ENCODE measurements at regions of chr20 and their contacts with region 1.

Region 1: DNA sequence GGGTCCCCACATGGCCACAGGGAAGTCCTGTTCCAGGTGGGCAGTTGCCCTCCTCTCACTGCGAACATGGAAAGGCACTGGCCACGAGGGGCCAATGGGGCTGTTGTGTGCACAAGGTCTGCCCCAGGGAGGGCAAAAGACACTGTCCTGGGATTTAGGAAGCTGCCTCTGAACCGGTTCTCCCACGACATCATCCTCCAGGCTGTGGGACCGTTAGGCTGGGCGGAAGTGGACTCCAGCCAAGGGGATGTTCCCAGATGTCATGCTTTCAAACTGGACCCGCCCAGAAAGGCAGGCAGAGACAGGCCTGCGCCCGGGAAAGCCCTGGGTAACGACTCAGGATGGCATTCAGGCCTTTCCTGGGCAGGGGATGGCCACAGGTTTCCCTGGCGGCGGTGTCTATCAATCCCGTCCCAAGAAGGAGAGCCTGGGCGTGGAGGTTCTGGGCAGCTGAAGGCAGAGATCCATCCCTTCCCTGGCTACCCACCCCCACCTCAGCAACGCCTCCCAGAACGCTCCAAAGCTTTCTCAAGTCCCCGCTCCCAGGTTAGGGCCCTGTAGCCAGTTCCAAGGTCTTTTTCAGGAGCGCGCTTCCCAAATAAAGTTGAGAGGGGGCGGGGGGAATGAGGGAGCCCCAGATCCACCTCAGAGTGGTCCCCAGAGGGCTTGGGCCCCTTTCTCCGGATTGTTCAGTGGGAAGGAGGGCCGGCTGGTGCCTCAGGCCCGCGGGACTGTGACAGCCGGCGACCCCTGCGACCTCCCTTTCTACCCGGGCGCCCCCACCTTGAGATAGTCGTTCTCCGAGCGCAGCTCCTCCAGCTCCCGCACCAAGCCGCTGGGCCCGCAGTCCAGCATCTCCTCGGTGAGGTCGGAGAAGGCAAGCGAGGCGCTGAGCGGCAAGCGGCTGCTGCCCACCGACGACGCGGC is 13.8 kb upstream of the TLDC2 start:
- DNase-seq: no peak
- ATAC-seq: no peak
- H3K4me3 ChIP-seq: peak overlapping the region in 4 of 5 experiments; percentile 31 to 65 (median 48)
- H3K4me3 Mint-ChIP-seq: peak overlapping the region; percentile 60
- H3K27ac ChIP-seq: no peak overlapping the region
- H3K27ac Mint-ChIP-seq: peak overlapping the region; percentile 50
- H3K4me1 ChIP-seq: peaks cover 46 to 49% of the 10 kb centered on the region in 2 donors
- H3K4me1 Mint-ChIP-seq: peaks cover 69% of the 10 kb centered on the region
- H3K27me3 ChIP-seq: no peaks in the 10 kb centered on the region
- H3K27me3 Mint-ChIP-seq: no peaks in the 10 kb centered on the region
- CTCF ChIP-seq: no peak

Region 2: GRCh38 chr20:36613974-36614373 is 248.2 kb before region 1 on chr20:
- CTCF ChIA-PET with region 1: interaction called, 33 read pairs
- POLR2A ChIA-PET with region 1: no interaction called
- intact Hi-C with region 1: loop called (anchors 5 kb)
- DNase-seq: no peak
- ATAC-seq: no peak
- H3K4me3 ChIP-seq: no peak overlapping the region
- H3K4me3 Mint-ChIP-seq: no peak overlapping the region
- H3K27ac ChIP-seq: no peak overlapping the region
- H3K27ac Mint-ChIP-seq: no peak overlapping the region
- H3K4me1 ChIP-seq: no peaks in the 10 kb centered on the region
- H3K4me1 Mint-ChIP-seq: no peaks in the 10 kb centered on the region
- H3K27me3 ChIP-seq: no peaks in the 10 kb centered on the region
- H3K27me3 Mint-ChIP-seq: no peaks in the 10 kb centered on the region
- CTCF ChIP-seq: no peak

Region 3: DNA sequence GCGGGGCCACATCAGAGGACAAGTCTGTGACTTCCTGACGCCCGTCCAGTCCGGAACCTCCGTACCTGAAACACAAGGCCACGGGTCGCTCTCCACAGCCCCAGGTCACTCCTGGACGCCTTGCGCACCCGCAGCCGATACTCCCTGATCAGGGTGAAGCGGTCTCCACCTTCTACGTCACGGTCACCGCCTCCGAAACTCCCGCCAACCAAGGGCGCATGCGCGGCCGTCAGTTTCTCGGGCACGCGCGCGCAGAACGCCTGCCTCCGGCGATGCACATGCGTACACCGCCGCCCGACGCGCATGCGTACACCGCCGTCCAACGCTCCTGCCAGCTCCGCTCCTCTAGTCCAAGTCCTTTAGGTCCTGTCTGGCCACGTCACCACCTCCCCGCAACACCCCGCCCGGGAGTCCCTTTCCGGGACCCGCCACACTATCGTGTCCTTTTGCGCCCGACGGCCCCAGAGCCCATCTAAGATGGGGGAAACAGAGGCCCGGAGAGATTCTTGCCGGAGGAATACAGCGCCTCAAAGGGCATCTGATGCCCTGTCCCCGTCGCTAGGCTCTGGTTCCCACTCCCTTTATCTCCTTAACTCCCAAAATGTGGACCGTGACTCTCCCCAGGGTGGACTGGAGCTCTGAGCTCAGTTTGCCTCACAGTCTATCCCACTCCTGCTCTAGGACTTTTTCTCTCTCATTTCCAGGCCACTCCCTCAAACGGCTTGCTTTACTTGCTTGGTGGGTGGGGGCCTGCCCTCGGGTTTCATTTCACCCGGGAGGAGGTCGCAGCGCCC is 88.3 kb before region 1 on chr20 and contains the start of gene DSN1:
- CTCF ChIA-PET with region 1: interaction called, 10 read pairs
- POLR2A ChIA-PET with region 1: interaction called, 3 read pairs
- intact Hi-C with region 1: loop called (anchors 1 kb)
- DNase-seq: peak; percentile 98
- ATAC-seq: peak; percentile 86
- H3K4me3 ChIP-seq: peak within 1 kb of the TSS; percentile 84 to 96 (median 92)
- H3K4me3 Mint-ChIP-seq: peak within 1 kb of the TSS; percentile 89
- H3K27ac ChIP-seq: peak within 1 kb of the TSS; percentile 77 to 92
- H3K27ac Mint-ChIP-seq: peak within 1 kb of the TSS; percentile 99
- H3K4me1 ChIP-seq: peaks cover 8 to 16% of the 10 kb centered on the region in 2 donors
- H3K4me1 Mint-ChIP-seq: peaks cover 33% of the 10 kb centered on the region
- H3K27me3 ChIP-seq: no peaks in the 10 kb centered on the region
- H3K27me3 Mint-ChIP-seq: no peaks in the 10 kb centered on the region
- CTCF ChIP-seq: no peak
- total RNA-seq, gene DSN1: 17.1 and 18.4 TPM in 2 replicates

Region 4: DNA sequence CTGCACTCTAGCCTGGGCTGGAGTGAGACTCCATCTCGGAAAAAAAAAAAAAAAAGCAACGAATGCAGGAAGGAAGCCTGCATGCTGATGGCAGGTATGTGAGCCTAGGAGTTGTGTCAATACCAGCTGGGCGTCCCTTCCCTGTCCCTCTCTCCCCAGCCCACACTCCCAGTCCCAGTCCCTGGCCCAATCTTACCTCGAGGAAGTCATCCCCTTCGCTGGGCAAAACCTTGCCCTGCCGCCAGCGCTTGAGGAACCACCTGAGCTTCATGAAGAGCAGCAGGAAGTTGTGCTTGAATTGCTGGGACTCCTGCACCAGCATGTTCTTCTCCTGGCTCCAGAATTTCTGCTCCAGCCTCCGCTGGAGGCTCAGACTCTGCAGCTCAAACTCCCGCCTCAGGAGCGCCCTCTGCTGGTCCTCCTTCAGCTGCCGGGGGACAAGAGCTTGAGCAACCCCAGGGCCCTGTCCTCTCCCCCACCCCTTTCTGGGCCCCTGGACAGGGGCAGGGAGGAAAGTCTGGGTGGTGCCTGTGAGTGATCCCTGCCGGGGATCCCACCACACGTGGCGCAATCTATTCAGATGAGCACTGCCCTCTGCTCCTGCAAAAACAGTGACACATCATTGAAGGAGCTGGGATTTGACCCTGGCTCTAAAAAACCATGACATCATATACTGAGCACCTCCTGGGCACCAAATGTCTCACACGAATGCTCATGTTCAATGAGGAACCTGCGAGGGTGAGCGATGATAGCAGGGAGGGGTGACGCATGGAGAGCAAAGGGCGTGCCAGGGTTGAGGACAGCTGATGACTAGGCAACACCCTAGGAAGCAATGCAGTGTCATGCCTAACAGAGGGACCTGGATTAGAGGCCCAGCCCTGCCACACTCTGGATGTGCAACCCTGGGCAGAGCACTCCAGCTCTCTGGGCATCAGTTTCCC is 53.6 kb before region 1 on chr20:
- CTCF ChIA-PET with region 1: interaction called, 80 read pairs
- POLR2A ChIA-PET with region 1: no interaction called
- intact Hi-C with region 1: loop called (anchors 1 kb)
- DNase-seq: peak; percentile 78
- ATAC-seq: peak; percentile 71
- H3K4me3 ChIP-seq: no peak overlapping the region
- H3K4me3 Mint-ChIP-seq: no peak overlapping the region
- H3K27ac ChIP-seq: no peak overlapping the region
- H3K27ac Mint-ChIP-seq: peak overlapping the region; percentile 50
- H3K4me1 ChIP-seq: peaks cover 0 to 9% of the 10 kb centered on the region in 2 donors
- H3K4me1 Mint-ChIP-seq: peaks cover 3% of the 10 kb centered on the region
- H3K27me3 ChIP-seq: no peaks in the 10 kb centered on the region
- H3K27me3 Mint-ChIP-seq: no peaks in the 10 kb centered on the region
- CTCF ChIP-seq: peak; percentile 83

Region 5: GRCh38 chr20:36847009-36847709 is 15.0 kb before region 1 on chr20:
- CTCF ChIA-PET with region 1: interaction called, 47 read pairs
- POLR2A ChIA-PET with region 1: interaction called, 10 read pairs
- intact Hi-C with region 1: loop called (anchors 2 kb)
- DNase-seq: no peak
- ATAC-seq: no peak
- H3K4me3 ChIP-seq: no peak overlapping the region
- H3K4me3 Mint-ChIP-seq: peak overlapping the region; percentile 11
- H3K27ac ChIP-seq: peak overlapping the region; percentile 97 to 98
- H3K27ac Mint-ChIP-seq: peak overlapping the region; percentile 96
- H3K4me1 ChIP-seq: peaks cover 82 to 95% of the 10 kb centered on the region in 2 donors
- H3K4me1 Mint-ChIP-seq: peaks cover 80% of the 10 kb centered on the region
- H3K27me3 ChIP-seq: no peaks in the 10 kb centered on the region
- H3K27me3 Mint-ChIP-seq: no peaks in the 10 kb centered on the region
- CTCF ChIP-seq: no peak

Region 6: DNA sequence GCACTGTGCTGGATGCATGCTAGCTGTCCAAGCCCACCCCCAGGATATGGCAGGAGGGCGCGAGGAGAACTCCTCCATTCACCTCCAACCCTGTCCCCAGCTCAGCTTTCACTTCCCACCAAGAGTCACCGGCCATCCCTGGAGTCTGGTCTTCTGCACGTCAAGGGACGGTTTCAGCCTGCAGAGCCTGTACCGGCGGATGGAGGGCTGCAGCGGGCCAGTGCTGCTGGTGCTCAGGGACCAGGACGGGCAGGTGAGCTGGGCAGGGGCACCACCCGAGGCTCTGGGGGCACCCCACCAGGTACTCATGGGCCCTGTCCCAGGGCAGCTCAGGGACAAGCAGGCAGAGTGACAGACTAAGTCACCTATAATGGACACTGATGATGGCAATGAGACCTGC is 16.8 kb after region 1 on chr20:
- CTCF ChIA-PET with region 1: no interaction called
- POLR2A ChIA-PET with region 1: no interaction called
- intact Hi-C with region 1: no loop called
- DNase-seq: no peak
- ATAC-seq: no peak
- H3K4me3 ChIP-seq: no peak overlapping the region
- H3K4me3 Mint-ChIP-seq: no peak overlapping the region
- H3K27ac ChIP-seq: no peak overlapping the region
- H3K27ac Mint-ChIP-seq: no peak overlapping the region
- H3K4me1 ChIP-seq: peaks cover 5 to 11% of the 10 kb centered on the region in 2 donors
- H3K4me1 Mint-ChIP-seq: peaks cover 15% of the 10 kb centered on the region
- H3K27me3 ChIP-seq: no peaks in the 10 kb centered on the region
- H3K27me3 Mint-ChIP-seq: no peaks in the 10 kb centered on the region
- CTCF ChIP-seq: no peak

Measured in B cell (primary cell).